ENCODE measurements at regions of chr18 and their contacts with region 1.

Region 1: GRCh38 chr18:8948471-8949149 is 153.9 kb upstream of the NDUFV2 start:
- DNase-seq: no peak
- ATAC-seq: no peak
- H3K4me3 ChIP-seq: no peak overlapping the region
- H3K27ac ChIP-seq: no peak overlapping the region
- H3K4me1 ChIP-seq: no peaks in the 10 kb centered on the region
- H3K27me3 ChIP-seq: no peaks in the 10 kb centered on the region; a peak in 1 of 4 replicates
- CTCF ChIP-seq: no peak
- EP300 ChIP-seq: no peak
- POLR2A ChIP-seq: no peak
- RAD21 ChIP-seq: no peak

Region 2: DNA sequence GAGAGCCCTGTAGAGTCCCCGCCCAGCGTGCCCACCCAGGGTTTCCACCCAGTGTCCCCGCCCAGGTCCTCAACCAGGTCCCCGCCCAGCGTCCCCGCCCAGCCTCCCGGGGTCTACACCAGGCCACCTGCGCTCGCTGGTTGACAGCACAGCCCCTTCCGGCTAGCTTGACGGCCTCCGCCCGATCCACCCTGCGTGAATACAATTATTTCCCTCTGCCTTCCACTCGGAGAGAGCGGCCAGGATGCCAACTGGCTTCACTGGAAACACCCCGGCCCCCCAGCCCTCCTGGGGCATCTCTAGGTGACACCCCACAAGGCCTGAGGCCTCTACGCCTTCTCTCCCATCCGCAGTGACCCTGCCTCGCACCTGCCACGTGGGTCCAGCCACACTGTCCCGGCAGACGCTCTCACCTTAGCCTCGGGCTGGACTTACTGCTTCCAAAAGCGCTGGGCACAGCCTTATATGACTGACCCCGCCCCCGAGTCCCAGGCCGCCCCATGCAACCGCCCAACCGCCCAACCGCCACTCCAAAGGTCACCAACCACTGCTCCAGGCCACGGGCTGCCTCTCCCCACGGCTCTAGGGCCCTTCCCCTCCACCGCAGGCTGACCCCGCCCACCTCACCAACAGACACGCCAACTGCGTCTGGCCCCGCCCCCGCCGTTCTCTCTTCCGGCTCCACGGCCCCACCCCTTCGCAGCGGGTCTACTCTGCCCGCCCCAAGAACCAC is 2019.1 kb before region 1 on chr18:
- CTCF ChIA-PET with region 1: no interaction called
- POLR2A ChIA-PET with region 1: no interaction called
- RAD21 ChIA-PET with region 1: no interaction called
- SMC1A ChIA-PET with region 1: no interaction called
- in situ Hi-C with region 1: loop called (anchors 25 kb)
- intact Hi-C with region 1: no loop called
- DNase-seq: no peak
- ATAC-seq: no peak
- H3K4me3 ChIP-seq: no peak overlapping the region
- H3K27ac ChIP-seq: no peak overlapping the region
- H3K4me1 ChIP-seq: no peaks in the 10 kb centered on the region
- H3K27me3 ChIP-seq: no peaks in the 10 kb centered on the region
- CTCF ChIP-seq: no peak
- EP300 ChIP-seq: no peak
- POLR2A ChIP-seq: no peak
- RAD21 ChIP-seq: no peak

Measured in GM12878 (cell line).